ENCODE measurements at regions of chr12 and their contacts with region 1.

Region 1: DNA sequence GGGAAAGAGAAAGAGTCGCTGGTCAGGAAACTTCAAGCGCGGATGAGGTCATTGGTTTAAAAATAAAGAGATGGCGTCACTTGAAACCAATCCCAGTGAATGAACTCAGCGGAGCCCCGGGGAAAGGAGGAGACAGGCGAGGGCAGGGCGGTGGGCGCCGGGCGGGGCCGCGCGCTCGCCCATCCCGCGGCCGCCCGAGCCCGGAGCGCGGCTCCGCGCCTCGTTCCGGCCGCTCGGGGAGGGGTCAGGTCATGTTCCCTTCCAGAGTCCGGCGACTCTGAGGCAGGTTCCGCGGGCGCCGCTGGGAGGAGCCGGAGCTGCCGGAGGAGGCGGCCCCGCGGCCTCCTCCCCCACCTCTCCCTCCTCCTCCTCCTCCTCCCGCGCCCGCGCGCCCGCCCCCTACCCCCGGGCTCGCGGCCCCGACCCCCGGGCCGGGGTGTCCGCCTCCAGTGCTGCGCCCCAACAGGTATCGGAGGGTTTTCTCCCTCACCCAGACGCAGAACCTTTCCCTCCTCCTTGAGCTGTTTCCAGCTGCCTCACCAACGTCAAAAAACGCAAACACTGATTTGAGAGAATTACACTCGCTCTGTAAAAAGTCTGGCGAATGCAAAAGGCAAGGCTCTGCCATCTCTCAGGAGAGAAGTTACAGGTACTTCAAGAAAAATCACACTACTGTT is at the start of gene DUSP16:
- DNase-seq: peak; percentile 95
- H3K4me3 ChIP-seq: peak within 1 kb of the TSS; percentile 39 to 95 (median 89)
- H3K27ac ChIP-seq: peak within 1 kb of the TSS; percentile 77
- H3K4me1 ChIP-seq: peaks cover 21% of the 10 kb centered on the region
- H3K27me3 ChIP-seq: peaks cover 0 to 6% of the 10 kb centered on the region in 2 experiments
- CTCF ChIP-seq: no peak
- POLR2A ChIP-seq: peak; percentile 56
- total RNA-seq, gene DUSP16: 12.7 and 19.5 TPM in 2 replicates

Region 2: DNA sequence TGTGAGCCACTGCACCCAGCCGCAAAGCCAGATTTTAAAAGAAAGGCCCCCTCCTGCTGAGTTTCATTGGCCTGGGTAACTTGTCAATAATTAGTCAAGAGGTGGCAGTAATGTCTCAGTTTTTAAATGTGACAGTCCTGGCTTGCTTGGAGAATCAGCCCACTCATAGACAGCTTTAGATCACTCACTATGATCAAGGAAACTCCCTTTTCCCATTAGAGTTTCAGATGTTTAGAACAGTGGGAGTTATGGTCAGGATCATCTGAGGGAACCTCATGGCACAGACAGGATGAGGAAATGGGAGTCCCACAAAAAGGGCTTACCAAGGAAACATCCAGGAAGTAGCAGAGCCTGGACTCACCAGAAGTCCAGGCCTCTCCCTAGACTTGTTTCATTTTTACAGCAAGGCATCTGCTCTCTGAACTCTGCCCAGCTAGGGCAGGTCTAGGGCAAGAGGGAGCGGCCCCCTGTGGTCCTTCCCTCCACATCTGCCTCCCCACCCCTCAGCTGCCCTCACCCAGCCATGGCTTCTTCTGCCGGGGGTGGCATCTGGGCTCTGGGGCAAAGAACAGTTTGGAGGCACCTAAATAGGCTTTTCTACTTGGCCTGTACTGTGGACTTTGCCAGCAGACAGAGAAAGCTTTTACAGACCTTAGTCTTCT is 480.8 kb before region 1 on chr12:
- CTCF ChIA-PET with region 1: interaction called, 3 read pairs
- POLR2A ChIA-PET with region 1: no interaction called
- dilution Hi-C with region 1: no loop called
- intact Hi-C with region 1: loop called (anchors 5 kb)
- DNase-seq: peak; percentile 79
- H3K4me3 ChIP-seq: no peak overlapping the region
- H3K27ac ChIP-seq: peak overlapping the region; percentile 40
- H3K4me1 ChIP-seq: peaks cover 5% of the 10 kb centered on the region
- H3K27me3 ChIP-seq: no peaks in the 10 kb centered on the region
- CTCF ChIP-seq: peak; percentile 17 to 29
- POLR2A ChIP-seq: no peak

Region 3: DNA sequence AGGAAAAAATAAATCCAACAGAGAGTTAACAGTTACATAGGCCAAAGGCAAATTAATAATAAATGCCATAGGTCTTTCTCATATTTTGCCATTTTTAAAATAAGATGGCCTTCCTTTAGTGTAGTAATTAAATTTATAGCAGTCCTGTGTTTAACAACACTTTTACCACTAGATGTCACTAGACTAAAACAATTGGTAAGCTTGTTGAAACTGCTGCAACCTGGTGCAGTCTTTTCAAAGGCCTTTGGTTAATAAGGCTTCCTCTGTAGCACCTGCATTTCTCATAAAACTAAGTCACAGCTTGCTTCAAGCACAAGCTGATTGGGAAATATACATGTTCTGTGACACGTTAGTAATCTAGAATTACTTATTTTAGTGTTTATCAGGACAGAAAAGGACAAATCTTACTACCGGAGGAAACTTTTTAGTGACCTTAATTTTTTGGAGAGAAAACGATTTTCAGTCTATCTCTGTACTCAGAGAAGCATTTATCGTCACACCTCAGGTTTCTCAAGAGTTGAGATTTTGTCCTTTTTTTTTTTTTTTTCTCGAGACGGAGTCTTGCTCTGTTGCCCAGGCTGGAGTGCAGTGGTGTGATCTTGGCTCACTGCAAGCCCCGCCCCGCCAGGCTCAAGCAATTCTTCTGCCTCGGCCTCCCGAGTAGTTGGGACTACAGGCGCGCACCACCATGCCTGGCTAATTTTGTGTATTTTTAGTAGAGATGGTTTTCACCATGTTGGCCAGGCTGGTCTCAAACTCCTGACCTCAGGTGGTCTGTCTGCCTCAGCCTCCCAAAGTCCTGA is 185.9 kb before region 1 on chr12:
- CTCF ChIA-PET with region 1: interaction called, 71 read pairs
- POLR2A ChIA-PET with region 1: no interaction called
- dilution Hi-C with region 1: no loop called
- intact Hi-C with region 1: loop called (anchors 1 kb)
- DNase-seq: peak; percentile 73
- H3K4me3 ChIP-seq: no peak overlapping the region
- H3K27ac ChIP-seq: no peak overlapping the region
- H3K4me1 ChIP-seq: no peaks in the 10 kb centered on the region
- H3K27me3 ChIP-seq: no peaks in the 10 kb centered on the region
- CTCF ChIP-seq: peak; percentile 43 to 44
- POLR2A ChIP-seq: no peak

Region 4: DNA sequence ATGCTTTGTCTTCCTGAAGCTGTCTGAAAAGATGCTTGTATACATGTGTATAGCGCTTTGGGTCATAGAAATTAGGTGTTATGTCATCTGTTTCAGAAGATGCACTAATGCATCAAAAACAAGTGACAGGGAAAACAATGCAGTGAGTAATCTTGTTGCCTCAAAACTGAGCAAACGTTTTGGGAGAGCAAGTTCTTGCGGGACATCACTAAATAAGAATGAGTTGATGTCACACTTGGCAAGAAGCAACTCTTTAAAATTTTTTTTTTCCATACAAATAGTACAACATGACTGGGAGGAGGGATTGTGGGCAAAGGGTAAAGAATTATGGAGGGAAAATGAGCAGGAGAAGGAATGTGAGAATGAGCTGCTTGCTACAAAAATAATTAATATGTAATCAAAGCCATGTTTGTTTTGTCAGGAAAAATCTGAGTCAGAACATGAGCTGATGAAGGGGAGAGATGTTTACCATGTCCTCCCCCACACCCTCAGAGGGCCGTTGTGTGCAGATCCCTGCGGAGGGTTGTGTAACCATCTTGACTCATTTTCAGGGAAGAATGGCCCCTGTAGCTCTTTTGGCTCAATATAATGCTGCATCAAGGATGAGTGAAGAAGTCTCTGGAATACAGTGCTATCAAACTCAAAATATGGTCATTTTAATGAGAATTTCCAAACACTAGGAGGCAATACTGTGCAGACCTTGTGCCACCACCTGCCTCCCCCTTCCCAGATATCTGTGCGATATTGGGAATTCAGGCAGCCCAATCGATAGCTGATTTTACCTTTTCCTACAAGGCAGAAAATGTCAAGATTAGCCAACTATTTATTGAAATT is 164.5 kb before region 1 on chr12:
- CTCF ChIA-PET with region 1: interaction called, 8 read pairs
- POLR2A ChIA-PET with region 1: no interaction called
- dilution Hi-C with region 1: no loop called
- intact Hi-C with region 1: loop called (anchors 5 kb)
- DNase-seq: peak; percentile 75
- H3K4me3 ChIP-seq: no peak overlapping the region
- H3K27ac ChIP-seq: peak overlapping the region; percentile 50
- H3K4me1 ChIP-seq: peaks cover 13% of the 10 kb centered on the region
- H3K27me3 ChIP-seq: no peaks in the 10 kb centered on the region
- CTCF ChIP-seq: peak in 1 of 2 donors; percentile 8
- POLR2A ChIP-seq: no peak

Region 5: DNA sequence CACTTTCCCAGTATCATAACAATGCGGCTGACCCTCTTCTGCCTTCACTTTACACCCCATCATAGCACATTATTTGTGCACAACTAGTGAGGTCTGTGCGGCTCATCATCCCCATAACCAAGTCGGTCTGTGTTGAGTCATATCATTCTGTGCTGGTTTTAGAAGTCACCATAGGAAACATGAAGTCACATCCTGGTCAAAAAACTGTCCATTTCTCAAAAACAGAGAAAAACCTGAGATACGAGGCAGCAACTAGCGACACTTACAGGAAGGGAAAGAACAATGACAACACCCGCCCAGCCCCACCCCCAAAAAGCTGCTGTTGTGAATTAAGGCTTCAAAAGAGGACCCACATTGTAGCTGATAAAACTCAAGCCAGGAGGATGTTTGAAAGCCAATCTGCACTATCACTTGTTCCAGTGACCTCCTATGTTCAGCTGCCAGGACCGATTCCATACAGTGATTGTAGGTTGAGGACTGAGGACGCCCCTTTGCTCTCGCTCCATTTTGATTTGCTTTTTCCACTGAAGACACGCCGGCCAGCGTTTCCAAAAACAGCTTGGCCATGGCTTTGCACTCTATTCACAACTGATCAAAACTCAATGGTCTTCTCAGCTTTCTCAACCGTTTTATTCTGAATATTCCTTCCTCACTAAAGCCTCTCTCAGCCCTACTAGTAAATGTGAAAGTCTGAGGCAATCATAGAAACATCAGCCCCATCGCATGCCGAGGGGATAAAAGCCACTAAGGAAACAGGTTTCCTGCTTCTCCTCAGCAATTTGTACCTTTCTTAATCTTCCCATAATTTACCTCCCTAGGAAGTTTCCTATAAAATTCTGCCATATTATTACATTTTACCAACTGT is 87.6 kb before region 1 on chr12:
- CTCF ChIA-PET with region 1: interaction called, 6 read pairs
- POLR2A ChIA-PET with region 1: no interaction called
- dilution Hi-C with region 1: no loop called
- intact Hi-C with region 1: loop called (anchors 2 kb)
- DNase-seq: peak; percentile 80
- H3K4me3 ChIP-seq: no peak overlapping the region
- H3K27ac ChIP-seq: peak overlapping the region; percentile 87
- H3K4me1 ChIP-seq: peaks cover 16% of the 10 kb centered on the region
- H3K27me3 ChIP-seq: no peaks in the 10 kb centered on the region
- CTCF ChIP-seq: no peak
- POLR2A ChIP-seq: no peak

Region 6: GRCh38 chr12:12533238-12533829 is 29.4 kb before region 1 on chr12:
- CTCF ChIA-PET with region 1: no interaction called
- POLR2A ChIA-PET with region 1: no interaction called
- dilution Hi-C with region 1: no loop called
- intact Hi-C with region 1: no loop called
- DNase-seq: no peak
- H3K4me3 ChIP-seq: no peak overlapping the region
- H3K27ac ChIP-seq: no peak overlapping the region
- H3K4me1 ChIP-seq: peaks cover 7% of the 10 kb centered on the region
- H3K27me3 ChIP-seq: no peaks in the 10 kb centered on the region
- CTCF ChIP-seq: no peak
- POLR2A ChIP-seq: no peak

Region 7: GRCh38 chr12:12611512-12612306 is 49.0 kb after region 1 on chr12 and contains the start of gene CREBL2:
- CTCF ChIA-PET with region 1: interaction called, 7 read pairs
- POLR2A ChIA-PET with region 1: no interaction called
- dilution Hi-C with region 1: no loop called
- intact Hi-C with region 1: loop called (anchors 1 kb)
- DNase-seq: peak; percentile 98
- H3K4me3 ChIP-seq: peak within 1 kb of the TSS; percentile 75 to 86 (median 84)
- H3K27ac ChIP-seq: peak within 1 kb of the TSS; percentile 81
- H3K4me1 ChIP-seq: peaks cover 5% of the 10 kb centered on the region
- H3K27me3 ChIP-seq: no peaks in the 10 kb centered on the region
- CTCF ChIP-seq: no peak
- POLR2A ChIP-seq: peak; percentile 20
- total RNA-seq, gene CREBL2: 14.5 and 19.4 TPM in 2 replicates

Region 8: DNA sequence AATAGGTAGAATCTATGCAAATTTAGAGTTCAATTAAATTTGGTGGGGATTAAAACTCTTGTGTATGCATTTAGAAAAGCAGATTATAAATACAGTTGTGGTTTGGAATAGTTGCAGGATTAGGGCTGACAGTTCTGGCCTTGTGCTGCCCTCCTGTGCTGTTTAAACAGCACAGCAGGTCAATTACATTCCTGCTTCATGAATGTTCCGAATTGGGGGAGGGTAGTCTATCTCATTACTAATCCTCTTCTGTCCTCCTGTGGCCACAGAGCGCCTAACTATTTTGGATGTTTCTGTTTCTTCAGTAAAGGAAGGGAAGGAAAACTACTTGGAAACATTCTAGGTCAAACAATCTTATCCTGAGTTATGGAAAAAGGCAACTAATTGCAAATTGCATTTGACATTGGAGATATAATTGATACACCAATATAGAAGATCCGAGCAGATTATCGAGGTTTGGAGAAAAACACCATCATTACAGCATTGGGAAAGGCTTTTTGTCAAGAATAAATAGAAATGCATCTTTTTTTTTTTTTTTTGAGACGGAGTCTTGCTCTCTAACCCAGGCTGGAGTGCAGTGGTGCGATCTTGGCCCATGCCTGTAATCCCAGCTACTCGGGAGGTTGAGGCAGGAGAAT is 142.0 kb after region 1 on chr12:
- CTCF ChIA-PET with region 1: no interaction called
- POLR2A ChIA-PET with region 1: no interaction called
- dilution Hi-C with region 1: no loop called
- intact Hi-C with region 1: loop called (anchors 1 kb)
- DNase-seq: peak; percentile 86
- H3K4me3 ChIP-seq: no peak overlapping the region
- H3K27ac ChIP-seq: no peak overlapping the region
- H3K4me1 ChIP-seq: no peaks in the 10 kb centered on the region
- H3K27me3 ChIP-seq: no peaks in the 10 kb centered on the region
- CTCF ChIP-seq: peak; percentile 80 to 93
- POLR2A ChIP-seq: no peak

Region 9: GRCh38 chr12:13148064-13148847 is 585.5 kb after region 1 on chr12:
- CTCF ChIA-PET with region 1: no interaction called
- POLR2A ChIA-PET with region 1: no interaction called
- dilution Hi-C with region 1: no loop called
- intact Hi-C with region 1: no loop called
- DNase-seq: no peak
- H3K4me3 ChIP-seq: no peak overlapping the region
- H3K27ac ChIP-seq: no peak overlapping the region
- H3K4me1 ChIP-seq: peaks cover 12% of the 10 kb centered on the region
- H3K27me3 ChIP-seq: no peaks in the 10 kb centered on the region
- CTCF ChIP-seq: no peak
- POLR2A ChIP-seq: no peak